HepG2 (cell line): ENCODE measurements at regions of chr6 and their contacts with region 1.

Region 1: DNA sequence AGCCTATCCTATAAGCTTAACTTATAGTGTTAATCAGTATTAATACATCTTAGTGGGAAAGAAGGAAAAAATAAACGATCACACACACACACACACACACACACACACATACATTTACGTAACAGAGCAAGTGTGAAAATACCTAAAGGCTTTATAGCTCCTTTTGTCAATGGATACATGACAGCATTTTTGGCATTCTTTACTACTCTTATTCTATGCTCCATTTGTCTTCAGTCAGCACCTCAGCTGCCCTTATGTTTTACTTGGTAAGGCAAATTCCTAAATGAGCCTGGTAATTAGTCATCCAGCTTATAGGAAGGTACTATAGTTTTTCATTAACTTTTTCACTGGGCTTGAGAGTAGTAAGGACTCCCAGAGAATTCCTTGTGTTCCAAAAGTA is 25.1 kb upstream of the SLC17A3 start:
- DNase-seq: peak; percentile 43
- ATAC-seq: peak; percentile 45
- H3K4me3 ChIP-seq: no peak overlapping the region; a peak in 1 of 6 replicates
- H3K27ac ChIP-seq: peak overlapping the region; percentile 61
- H3K4me1 ChIP-seq: peaks cover 54% of the 10 kb centered on the region
- H3K27me3 ChIP-seq: no peaks in the 10 kb centered on the region
- CTCF ChIP-seq: no peak
- EP300 ChIP-seq: no peak
- POLR2A ChIP-seq: no peak
- RAD21 ChIP-seq: no peak

Region 2: GRCh38 chr6:25927756-25928216 is 28.7 kb after region 1 on chr6:
- CTCF ChIA-PET with region 1: no interaction called
- POLR2A ChIA-PET with region 1: interaction called, 26 read pairs
- in situ Hi-C with region 1: loop called (anchors 5 kb)
- intact Hi-C with region 1: no loop called
- DNase-seq: no peak
- ATAC-seq: no peak
- H3K4me3 ChIP-seq: peak overlapping the region in 2 of 3 experiments; percentile 43 to 45; a peak in 3 of 6 replicates
- H3K27ac ChIP-seq: peak overlapping the region; percentile 81
- H3K4me1 ChIP-seq: peaks cover 66% of the 10 kb centered on the region
- H3K27me3 ChIP-seq: no peaks in the 10 kb centered on the region
- CTCF ChIP-seq: no peak
- EP300 ChIP-seq: no peak
- POLR2A ChIP-seq: no peak
- RAD21 ChIP-seq: no peak

Region 3: DNA sequence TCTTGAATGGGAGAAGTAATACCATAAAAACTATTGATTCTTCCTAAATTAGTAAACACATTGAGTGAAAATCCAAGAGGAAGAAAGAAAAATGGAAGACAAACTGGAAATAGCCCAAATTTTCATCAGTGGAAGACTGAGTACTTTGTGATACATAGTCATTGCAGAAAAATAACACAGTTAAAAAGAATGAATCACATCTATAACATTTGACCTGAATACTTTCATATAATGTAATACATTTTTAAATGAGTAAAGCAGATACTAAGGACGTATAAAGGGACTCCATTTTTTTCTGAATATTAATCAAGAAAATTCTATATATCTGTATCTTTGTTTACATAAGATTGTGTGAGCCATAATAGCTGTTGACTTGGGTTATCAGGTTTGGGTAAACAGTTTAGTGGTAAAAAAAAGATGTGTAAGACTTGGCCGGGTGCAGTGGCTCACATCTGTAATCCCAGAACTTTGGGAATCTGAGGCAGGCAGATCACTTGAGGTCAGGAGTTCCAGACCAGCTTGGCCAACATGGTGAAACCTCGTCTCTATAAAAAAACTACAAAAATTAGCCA is 35.7 kb after region 1 on chr6:
- CTCF ChIA-PET with region 1: no interaction called
- POLR2A ChIA-PET with region 1: interaction called, 26 read pairs
- in situ Hi-C with region 1: loop called (anchors 5 kb)
- intact Hi-C with region 1: no loop called
- DNase-seq: no peak
- ATAC-seq: no peak
- H3K4me3 ChIP-seq: no peak overlapping the region
- H3K27ac ChIP-seq: no peak overlapping the region
- H3K4me1 ChIP-seq: peaks cover 63% of the 10 kb centered on the region
- H3K27me3 ChIP-seq: no peaks in the 10 kb centered on the region
- CTCF ChIP-seq: no peak
- EP300 ChIP-seq: no peak
- POLR2A ChIP-seq: no peak
- RAD21 ChIP-seq: no peak

Region 4: DNA sequence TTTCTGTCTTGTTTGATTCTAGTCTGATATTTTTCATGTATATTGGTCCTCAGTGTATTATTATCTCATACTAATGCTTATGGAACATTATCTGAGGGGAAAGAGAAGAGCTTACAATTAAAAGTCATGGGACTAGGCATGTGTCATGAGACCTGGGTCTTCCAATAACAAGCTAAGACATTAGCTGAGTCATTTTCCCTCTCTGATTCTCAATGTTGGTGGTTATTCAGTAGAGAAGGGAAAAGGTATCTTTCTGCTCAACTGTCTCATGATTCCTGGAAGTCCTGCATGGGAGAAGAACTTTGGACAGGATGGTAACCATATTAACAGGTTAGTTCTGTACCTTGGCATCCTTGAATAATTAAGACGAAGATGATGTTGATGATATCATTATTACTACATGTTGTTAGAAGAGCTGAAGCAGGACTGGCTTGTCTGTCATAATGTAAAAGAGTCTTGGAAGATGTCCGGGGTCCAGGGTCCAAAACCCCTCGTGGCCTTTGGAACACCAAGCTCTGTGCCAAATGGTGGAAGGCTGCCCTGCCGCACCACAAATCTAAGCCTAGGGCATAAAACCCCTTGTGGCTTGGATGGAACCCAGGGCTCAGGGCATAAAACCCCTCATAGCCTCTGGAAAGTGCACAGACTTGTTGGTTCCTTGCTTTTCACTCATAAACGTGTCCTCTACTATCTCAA is 82.6 kb after region 1 on chr6:
- CTCF ChIA-PET with region 1: no interaction called
- POLR2A ChIA-PET with region 1: no interaction called
- in situ Hi-C with region 1: no loop called
- intact Hi-C with region 1: no loop called
- DNase-seq: no peak
- ATAC-seq: no peak
- H3K4me3 ChIP-seq: no peak overlapping the region
- H3K27ac ChIP-seq: no peak overlapping the region
- H3K4me1 ChIP-seq: peaks cover 12% of the 10 kb centered on the region; the same call in 1 of the 2 replicates
- H3K27me3 ChIP-seq: no peaks in the 10 kb centered on the region
- CTCF ChIP-seq: no peak
- EP300 ChIP-seq: no peak
- POLR2A ChIP-seq: no peak
- RAD21 ChIP-seq: no peak